Activated CD4-positive, alpha-beta memory T cell treated with anti-CD3 and anti-CD28 coated beads for 36 hours (primary cell): ENCODE measurements at regions of chr15 and their contacts with region 1.

Region 1: GRCh38 chr15:25508369-25509002 is 69.7 kb upstream of the UBE3A start:
- DNase-seq: no peak
- H3K4me3 Mint-ChIP-seq: no peak overlapping the region
- H3K27ac Mint-ChIP-seq: no peak overlapping the region
- H3K4me1 Mint-ChIP-seq: no peaks in the 10 kb centered on the region
- H3K27me3 Mint-ChIP-seq: peaks cover 5% of the 10 kb centered on the region

Region 2: GRCh38 chr15:25710184-25710583 is 201.7 kb after region 1 on chr15:
- CTCF ChIA-PET with region 1: interaction called, 18 read pairs
- POLR2A ChIA-PET with region 1: no interaction called
- intact Hi-C with region 1: no loop called
- DNase-seq: peak; percentile 61
- H3K4me3 Mint-ChIP-seq: no peak overlapping the region
- H3K27ac Mint-ChIP-seq: no peak overlapping the region
- H3K4me1 Mint-ChIP-seq: no peaks in the 10 kb centered on the region
- H3K27me3 Mint-ChIP-seq: no peaks in the 10 kb centered on the region

Region 3: DNA sequence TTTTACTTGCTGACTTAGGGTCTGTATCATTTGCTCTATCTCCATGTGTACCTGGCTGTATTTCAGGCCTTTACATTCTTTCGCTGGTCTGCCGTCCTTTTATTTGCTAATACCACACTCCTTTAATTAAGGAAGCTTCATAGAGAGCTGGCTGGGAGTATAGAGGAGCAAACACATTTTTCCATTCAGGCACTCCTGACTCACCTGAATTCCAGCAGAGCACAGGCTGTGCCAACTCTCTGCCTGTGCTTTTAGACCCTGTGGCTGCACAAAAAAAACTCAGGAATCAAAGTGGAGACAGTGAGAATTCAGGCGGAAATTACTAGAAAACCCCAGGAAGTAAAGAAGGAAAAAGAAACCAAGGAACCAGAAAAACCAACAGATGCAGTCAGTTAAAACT is 383.6 kb after region 1 on chr15:
- CTCF ChIA-PET with region 1: no interaction called
- POLR2A ChIA-PET with region 1: no interaction called
- intact Hi-C with region 1: no loop called
- DNase-seq: no peak
- H3K4me3 Mint-ChIP-seq: no peak overlapping the region
- H3K27ac Mint-ChIP-seq: no peak overlapping the region
- H3K4me1 Mint-ChIP-seq: no peaks in the 10 kb centered on the region
- H3K27me3 Mint-ChIP-seq: peaks cover 6% of the 10 kb centered on the region

Region 4: DNA sequence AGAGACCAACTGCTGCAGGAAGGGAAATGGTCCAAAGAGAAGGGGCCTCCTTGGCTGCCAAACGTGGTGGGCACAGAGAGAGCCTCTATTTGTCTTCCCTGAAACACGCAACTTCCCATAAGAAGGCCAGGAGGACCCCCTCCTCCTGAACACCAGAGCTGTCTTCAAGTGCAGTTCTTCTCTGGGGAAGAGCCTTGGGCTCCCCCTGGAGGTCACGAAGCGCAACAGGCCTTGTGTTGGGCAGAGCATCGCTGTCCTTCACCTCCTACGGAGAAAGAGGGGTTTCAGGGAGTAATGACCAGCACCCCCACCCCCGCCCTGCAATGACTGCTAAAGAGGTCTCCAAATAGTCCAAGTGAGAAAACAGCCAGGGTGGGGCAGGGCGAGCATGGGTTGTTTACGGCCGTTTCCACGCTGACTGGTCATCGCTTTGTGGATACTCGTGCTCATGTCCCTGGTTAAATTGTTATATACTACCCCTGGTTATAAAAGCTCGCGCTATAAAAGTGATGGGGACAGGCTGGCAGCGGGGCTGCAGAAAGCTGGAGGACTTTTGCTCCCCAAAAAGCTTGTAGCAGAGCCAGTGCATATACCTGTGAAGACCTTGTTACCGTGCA is 752.1 kb after region 1 on chr15:
- CTCF ChIA-PET with region 1: interaction called, 14 read pairs
- POLR2A ChIA-PET with region 1: no interaction called
- intact Hi-C with region 1: no loop called
- DNase-seq: peak; percentile 37
- H3K4me3 Mint-ChIP-seq: no peak overlapping the region
- H3K27ac Mint-ChIP-seq: no peak overlapping the region
- H3K4me1 Mint-ChIP-seq: no peaks in the 10 kb centered on the region
- H3K27me3 Mint-ChIP-seq: peaks cover 4% of the 10 kb centered on the region

Region 5: DNA sequence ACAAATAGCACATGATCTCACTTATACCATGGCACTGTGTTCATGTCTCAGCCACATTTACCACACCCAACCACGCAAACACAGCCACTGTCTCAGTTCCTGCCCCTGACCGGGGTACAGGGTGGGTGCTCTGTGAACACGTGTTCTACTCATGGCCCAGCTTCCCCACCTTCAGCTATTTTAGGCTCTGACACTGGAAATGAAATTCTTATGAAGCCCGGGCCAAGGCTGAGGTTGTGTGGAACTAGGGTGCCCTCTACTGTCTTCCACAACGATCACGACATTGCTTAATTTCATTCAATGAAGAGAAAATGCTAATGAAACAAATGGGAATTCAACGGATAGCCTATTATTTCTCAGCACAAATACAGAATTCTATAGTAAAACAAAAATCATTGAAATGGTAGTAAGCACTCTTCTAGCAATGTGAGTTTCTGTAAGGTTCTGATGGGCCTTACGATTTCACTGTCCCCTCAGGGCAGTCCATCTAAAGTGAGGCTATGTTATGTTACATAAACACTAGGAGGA is 1356.2 kb after region 1 on chr15:
- CTCF ChIA-PET with region 1: interaction called, 4 read pairs
- POLR2A ChIA-PET with region 1: no interaction called
- intact Hi-C with region 1: loop called (anchors 10 kb)
- DNase-seq: no peak
- H3K4me3 Mint-ChIP-seq: no peak overlapping the region
- H3K27ac Mint-ChIP-seq: no peak overlapping the region
- H3K4me1 Mint-ChIP-seq: no peaks in the 10 kb centered on the region
- H3K27me3 Mint-ChIP-seq: peaks cover 20% of the 10 kb centered on the region